Naive thymus-derived CD4-positive, alpha-beta T cell (primary cell): ENCODE measurements at regions of chr1 and their contacts with region 1.

Region 1: DNA sequence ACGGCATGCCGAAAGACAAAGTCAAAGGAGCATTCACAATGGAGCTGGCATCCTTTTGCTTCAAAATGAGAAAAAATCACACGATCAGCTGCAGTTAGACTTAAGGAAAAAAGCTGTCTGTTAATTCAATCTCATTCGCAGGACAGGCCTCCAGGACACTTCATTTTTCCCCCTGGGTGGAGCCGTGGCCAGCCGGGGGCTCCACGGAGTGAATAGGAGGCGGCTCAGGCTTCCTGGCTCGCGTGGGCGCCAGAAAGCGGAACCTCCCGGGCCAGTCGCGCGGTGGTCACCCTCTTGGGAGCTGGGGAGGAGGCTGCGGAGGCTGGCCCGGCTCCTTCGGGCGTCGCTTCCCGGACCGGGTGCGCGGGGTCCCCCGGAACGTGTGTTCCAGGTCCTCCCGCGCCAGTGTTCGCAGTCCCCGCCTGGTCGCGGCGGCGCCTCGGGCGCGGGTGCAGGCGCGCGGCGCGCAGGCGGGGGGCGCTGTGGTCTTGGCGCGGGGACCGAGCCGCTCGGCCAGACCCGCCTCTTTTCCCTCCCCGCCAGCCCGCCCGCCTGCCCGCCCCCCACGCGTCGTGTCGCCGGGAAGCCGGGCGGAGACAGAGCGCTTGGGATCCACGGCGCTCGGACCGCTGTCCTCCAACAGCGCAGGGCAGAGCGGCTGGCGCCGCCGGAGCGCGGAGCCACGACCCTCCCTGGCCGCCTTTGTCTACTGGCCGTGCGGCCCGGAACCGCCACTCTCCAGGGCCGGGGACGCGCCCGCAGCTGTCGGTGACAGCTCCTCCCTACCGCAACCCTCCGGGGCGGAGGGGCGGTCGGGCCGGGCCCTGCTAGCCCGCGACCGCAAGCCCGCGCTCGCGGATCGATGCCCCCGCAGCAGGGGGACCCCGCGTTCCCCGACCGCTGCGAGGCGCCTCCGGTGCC is at the start of gene RHOU:
- DNase-seq: peak; percentile 44 to 80 (median 71)
- ATAC-seq: peak; percentile 92
- H3K4me3 ChIP-seq: peak within 1 kb of the TSS; percentile 70
- H3K4me3 Mint-ChIP-seq: peak within 1 kb of the TSS; percentile 80 to 94 (median 90)
- H3K27ac ChIP-seq: peak within 1 kb of the TSS; percentile 27
- H3K27ac Mint-ChIP-seq: peak within 1 kb of the TSS; percentile 10 to 64 (median 45)
- H3K4me1 ChIP-seq: peaks cover 0 to 7% of the 10 kb centered on the region in 2 donors
- H3K4me1 Mint-ChIP-seq: peaks cover 9 to 34% (median 14%) of the 10 kb centered on the region in 7 donors
- H3K27me3 ChIP-seq: no peaks in the 10 kb centered on the region
- H3K27me3 Mint-ChIP-seq: peaks cover 0 to 52% (median 13%) of the 10 kb centered on the region in 5 donors
- total RNA-seq, gene RHOU: 1.3 to 6.5 (median 1.8) TPM

Region 2: DNA sequence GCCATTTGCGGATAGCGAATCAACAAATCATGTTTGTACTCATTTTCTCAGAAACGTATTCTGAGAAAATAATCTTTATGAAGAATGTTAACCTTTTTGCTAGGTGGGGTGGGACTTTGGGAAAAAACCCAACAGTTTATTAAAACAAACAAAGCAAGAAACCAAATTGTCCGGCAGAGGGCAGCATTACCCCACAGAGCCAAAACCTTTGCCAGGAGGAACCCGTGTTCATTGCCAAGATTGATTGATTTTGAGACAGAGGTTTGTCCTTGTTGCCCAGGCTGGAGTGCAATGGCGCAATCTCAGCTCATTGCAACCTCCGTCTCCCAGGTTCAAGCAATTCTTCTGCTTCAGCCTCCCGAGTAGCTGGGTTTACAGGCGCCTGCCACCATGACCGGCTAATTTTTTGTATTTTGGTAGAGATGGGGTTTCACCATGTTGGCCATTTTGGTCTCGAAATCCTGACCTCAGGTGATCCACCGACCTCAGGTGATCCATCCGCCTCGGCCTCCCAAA is 70.7 kb before region 1 on chr1:
- CTCF ChIA-PET with region 1: no interaction called
- POLR2A ChIA-PET with region 1: no interaction called
- intact Hi-C with region 1: loop called in 1 of 2 experiments (anchors 1 kb)
- DNase-seq: peak; percentile 54 to 83 (median 71)
- ATAC-seq: peak; percentile 73
- H3K4me3 ChIP-seq: no peak overlapping the region
- H3K4me3 Mint-ChIP-seq: no peak overlapping the region
- H3K27ac ChIP-seq: no peak overlapping the region
- H3K27ac Mint-ChIP-seq: no peak overlapping the region
- H3K4me1 ChIP-seq: no peaks in the 10 kb centered on the region
- H3K4me1 Mint-ChIP-seq: peaks cover 0 to 2% (median 0%) of the 10 kb centered on the region in 7 donors
- H3K27me3 ChIP-seq: no peaks in the 10 kb centered on the region
- H3K27me3 Mint-ChIP-seq: peaks cover 0 to 28% (median 11%) of the 10 kb centered on the region in 5 donors

Region 3: GRCh38 chr1:228794173-228794572 is 59.0 kb after region 1 on chr1:
- CTCF ChIA-PET with region 1: interaction called, 3 read pairs
- POLR2A ChIA-PET with region 1: no interaction called
- intact Hi-C with region 1: loop called (anchors 1 to 2 kb)
- DNase-seq: peak in 7 of 9 donors; percentile 6 to 49 (median 29)
- ATAC-seq: peak; percentile 41
- H3K4me3 ChIP-seq: peak overlapping the region; percentile 22
- H3K4me3 Mint-ChIP-seq: no peak overlapping the region
- H3K27ac ChIP-seq: no peak overlapping the region
- H3K27ac Mint-ChIP-seq: no peak overlapping the region
- H3K4me1 ChIP-seq: peaks cover 48 to 50% of the 10 kb centered on the region in 2 donors
- H3K4me1 Mint-ChIP-seq: peaks cover 16 to 37% (median 25%) of the 10 kb centered on the region in 7 donors
- H3K27me3 ChIP-seq: no peaks in the 10 kb centered on the region
- H3K27me3 Mint-ChIP-seq: no peaks in the 10 kb centered on the region

Region 4: DNA sequence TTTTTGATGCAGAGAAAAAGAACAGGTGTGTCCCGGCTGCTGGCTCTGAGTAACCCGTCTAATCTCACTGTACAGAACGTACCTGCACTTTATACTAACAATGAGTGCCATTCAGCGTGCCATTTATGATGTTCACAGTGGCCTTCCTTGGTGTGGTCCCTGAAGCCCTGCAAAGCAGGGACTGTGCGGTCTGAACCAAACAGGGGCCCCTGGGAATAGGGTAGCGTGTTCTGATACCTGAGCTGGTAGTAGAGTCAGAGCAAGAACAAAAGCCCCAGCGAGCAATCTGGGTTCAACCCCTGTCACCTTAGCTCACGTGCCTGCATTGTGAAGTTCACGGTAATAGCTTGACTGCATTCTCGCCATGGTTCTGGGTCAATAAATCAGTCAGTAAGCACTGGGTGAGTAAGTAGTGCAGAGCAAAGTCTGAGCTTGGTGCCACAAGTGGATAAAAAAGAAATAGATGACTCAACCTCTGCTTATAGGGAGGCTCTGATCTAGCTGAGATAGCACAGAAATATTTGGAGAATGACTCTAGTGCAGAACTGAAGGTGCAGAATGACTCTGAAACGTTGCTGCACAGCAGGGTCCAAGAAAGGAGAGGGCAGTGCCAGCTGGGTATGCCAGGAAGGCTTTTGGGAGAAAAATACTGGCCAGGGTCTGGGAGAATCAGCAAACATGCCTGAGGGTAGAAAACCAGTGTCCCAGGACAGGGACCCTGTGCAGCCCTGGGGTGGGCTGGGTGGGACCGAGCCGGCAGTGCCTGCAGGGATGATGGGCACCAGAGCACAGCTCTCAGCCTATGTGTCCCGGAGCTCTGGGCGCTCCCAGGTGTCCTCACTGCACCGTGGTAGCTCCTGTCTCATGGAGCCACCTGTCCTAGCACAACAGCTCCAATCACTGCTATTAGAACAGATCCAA is 126.0 kb after region 1 on chr1:
- CTCF ChIA-PET with region 1: interaction called, 6 read pairs
- POLR2A ChIA-PET with region 1: no interaction called
- intact Hi-C with region 1: loop called in 1 of 2 experiments (anchors 5 kb)
- DNase-seq: no peak
- ATAC-seq: no peak
- H3K4me3 ChIP-seq: no peak overlapping the region
- H3K4me3 Mint-ChIP-seq: peak overlapping the region in 1 of 10 donors; percentile 26
- H3K27ac ChIP-seq: no peak overlapping the region
- H3K27ac Mint-ChIP-seq: peak overlapping the region in 1 of 9 donors; percentile 37
- H3K4me1 ChIP-seq: peaks cover 0 to 18% of the 10 kb centered on the region in 2 donors
- H3K4me1 Mint-ChIP-seq: peaks cover 17 to 42% (median 40%) of the 10 kb centered on the region in 7 donors
- H3K27me3 ChIP-seq: no peaks in the 10 kb centered on the region
- H3K27me3 Mint-ChIP-seq: peaks cover 0 to 30% (median 0%) of the 10 kb centered on the region in 5 donors

Region 5: DNA sequence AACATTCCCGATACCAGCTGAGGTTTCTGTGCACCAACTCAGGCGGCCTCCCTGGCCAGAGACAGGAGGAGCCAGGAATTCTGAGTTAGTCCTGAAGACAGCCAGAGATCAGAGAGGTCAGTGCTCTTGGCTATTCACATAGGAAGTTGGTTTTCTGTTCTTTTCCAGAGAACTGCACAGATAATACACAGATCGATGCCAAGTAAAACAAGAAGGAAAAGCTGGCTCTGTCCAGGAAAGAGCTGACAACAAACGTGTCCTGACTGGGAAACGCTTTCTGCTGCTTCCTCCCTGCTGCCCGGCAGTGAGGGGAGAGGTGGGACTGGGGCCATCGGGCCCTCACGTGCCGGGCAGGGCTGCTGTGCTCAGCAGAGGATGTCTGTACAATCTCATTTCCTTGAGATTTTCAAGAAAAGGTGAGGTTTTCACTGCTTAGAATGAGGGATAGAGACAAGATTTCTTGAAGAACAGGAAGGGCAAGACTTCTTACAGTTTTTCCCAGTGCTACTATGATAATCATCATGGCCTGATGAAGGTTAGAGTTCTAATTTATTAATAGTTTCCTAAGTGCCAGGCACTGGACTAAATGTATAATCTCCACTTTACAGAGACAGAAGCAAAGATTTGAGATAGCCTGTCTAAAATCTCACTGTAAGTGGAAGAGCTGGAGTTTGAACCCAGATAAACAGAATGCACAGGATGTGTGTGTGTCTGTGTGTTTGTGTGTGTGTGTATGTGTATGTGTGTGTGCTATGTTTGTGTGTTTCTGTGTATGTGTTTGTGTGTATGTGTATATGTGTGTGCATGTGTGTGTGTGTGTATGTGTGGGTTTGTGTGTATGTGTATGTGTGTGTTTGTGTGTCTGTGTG is 324.8 kb after region 1 on chr1:
- CTCF ChIA-PET with region 1: no interaction called
- POLR2A ChIA-PET with region 1: no interaction called
- intact Hi-C with region 1: loop called in 1 of 2 experiments (anchors 5 kb)
- DNase-seq: peak in 1 of 9 donors; percentile 10
- ATAC-seq: no peak
- H3K4me3 ChIP-seq: no peak overlapping the region
- H3K4me3 Mint-ChIP-seq: peak overlapping the region in 8 of 10 donors; percentile 2 to 85 (median 44)
- H3K27ac ChIP-seq: no peak overlapping the region
- H3K27ac Mint-ChIP-seq: peak overlapping the region in 8 of 9 donors; percentile 0 to 80 (median 42)
- H3K4me1 ChIP-seq: peaks cover 30 to 43% of the 10 kb centered on the region in 2 donors
- H3K4me1 Mint-ChIP-seq: peaks cover 25 to 75% (median 63%) of the 10 kb centered on the region in 7 donors
- H3K27me3 ChIP-seq: no peaks in the 10 kb centered on the region
- H3K27me3 Mint-ChIP-seq: peaks cover 0 to 15% (median 0%) of the 10 kb centered on the region in 5 donors

Region 6: GRCh38 chr1:229227298-229227919 is 492.3 kb after region 1 on chr1:
- CTCF ChIA-PET with region 1: interaction called, 55 read pairs
- POLR2A ChIA-PET with region 1: interaction called, 3 read pairs
- intact Hi-C with region 1: loop called (anchors 1 kb)
- DNase-seq: peak; percentile 64 to 85 (median 80)
- ATAC-seq: peak; percentile 86
- H3K4me3 ChIP-seq: no peak overlapping the region
- H3K4me3 Mint-ChIP-seq: peak overlapping the region in 5 of 10 donors; percentile 12 to 63 (median 33)
- H3K27ac ChIP-seq: no peak overlapping the region
- H3K27ac Mint-ChIP-seq: peak overlapping the region in 6 of 9 donors; percentile 3 to 75 (median 25)
- H3K4me1 ChIP-seq: peaks cover 0 to 4% of the 10 kb centered on the region in 2 donors
- H3K4me1 Mint-ChIP-seq: peaks cover 4 to 33% (median 22%) of the 10 kb centered on the region in 7 donors
- H3K27me3 ChIP-seq: no peaks in the 10 kb centered on the region
- H3K27me3 Mint-ChIP-seq: peaks cover 0 to 32% (median 5%) of the 10 kb centered on the region in 5 donors

Region 7: GRCh38 chr1:229403573-229403972 is 668.4 kb after region 1 on chr1:
- CTCF ChIA-PET with region 1: no interaction called
- POLR2A ChIA-PET with region 1: no interaction called
- intact Hi-C with region 1: no loop called
- DNase-seq: no peak
- ATAC-seq: no peak
- H3K4me3 ChIP-seq: no peak overlapping the region
- H3K4me3 Mint-ChIP-seq: no peak overlapping the region
- H3K27ac ChIP-seq: no peak overlapping the region
- H3K27ac Mint-ChIP-seq: no peak overlapping the region
- H3K4me1 ChIP-seq: no peaks in the 10 kb centered on the region
- H3K4me1 Mint-ChIP-seq: peaks cover 0 to 9% (median 4%) of the 10 kb centered on the region in 7 donors
- H3K27me3 ChIP-seq: peaks cover 0 to 5% of the 10 kb centered on the region in 2 donors
- H3K27me3 Mint-ChIP-seq: peaks cover 41 to 69% (median 51%) of the 10 kb centered on the region in 5 donors